PC-9 (cell line): ENCODE measurements at regions of chr12 and their contacts with region 1.

Region 1: GRCh38 chr12:48311313-48311712 is 39.4 kb downstream of the ZNF641 start:
- DNase-seq: no peak
- H3K4me3 ChIP-seq: no peak overlapping the region
- H3K27ac ChIP-seq: no peak overlapping the region
- H3K4me1 ChIP-seq: no peaks in the 10 kb centered on the region
- H3K27me3 ChIP-seq: peaks cover 6% of the 10 kb centered on the region; the same call in 1 of the 2 replicates
- CTCF ChIP-seq: no peak

Region 2: DNA sequence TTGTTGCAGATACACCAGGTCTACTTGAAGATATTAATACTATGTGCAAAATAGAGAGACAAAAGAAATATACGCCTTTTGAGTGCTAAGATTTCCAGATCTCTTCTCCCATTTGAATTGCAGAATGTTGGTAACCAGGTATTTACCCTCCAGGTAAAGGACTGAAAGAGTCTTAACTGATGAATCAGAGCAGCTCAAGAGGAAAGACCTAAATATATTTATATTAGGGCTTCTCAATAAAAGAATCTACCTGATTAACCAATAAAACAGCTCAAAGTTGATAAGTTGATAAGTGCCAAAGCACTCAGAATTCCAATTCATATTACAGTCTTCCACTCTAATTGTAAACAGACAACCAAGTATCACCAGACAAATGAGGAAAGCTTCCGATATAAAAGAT is 19.8 kb before region 1 on chr12:
- CTCF ChIA-PET with region 1: no interaction called
- POLR2A ChIA-PET with region 1: interaction called, 11 read pairs
- intact Hi-C with region 1: no loop called
- DNase-seq: peak in 1 of 2 experiments; percentile 85
- H3K4me3 ChIP-seq: peak overlapping the region; percentile 10; the same call in 1 of the 2 replicates
- H3K27ac ChIP-seq: peak overlapping the region; percentile 38
- H3K4me1 ChIP-seq: peaks cover 8% of the 10 kb centered on the region
- H3K27me3 ChIP-seq: no peaks in the 10 kb centered on the region
- CTCF ChIP-seq: no peak